AG04450 (cell line): ENCODE measurements at regions of chr2 and their contacts with region 1.

Region 1: DNA sequence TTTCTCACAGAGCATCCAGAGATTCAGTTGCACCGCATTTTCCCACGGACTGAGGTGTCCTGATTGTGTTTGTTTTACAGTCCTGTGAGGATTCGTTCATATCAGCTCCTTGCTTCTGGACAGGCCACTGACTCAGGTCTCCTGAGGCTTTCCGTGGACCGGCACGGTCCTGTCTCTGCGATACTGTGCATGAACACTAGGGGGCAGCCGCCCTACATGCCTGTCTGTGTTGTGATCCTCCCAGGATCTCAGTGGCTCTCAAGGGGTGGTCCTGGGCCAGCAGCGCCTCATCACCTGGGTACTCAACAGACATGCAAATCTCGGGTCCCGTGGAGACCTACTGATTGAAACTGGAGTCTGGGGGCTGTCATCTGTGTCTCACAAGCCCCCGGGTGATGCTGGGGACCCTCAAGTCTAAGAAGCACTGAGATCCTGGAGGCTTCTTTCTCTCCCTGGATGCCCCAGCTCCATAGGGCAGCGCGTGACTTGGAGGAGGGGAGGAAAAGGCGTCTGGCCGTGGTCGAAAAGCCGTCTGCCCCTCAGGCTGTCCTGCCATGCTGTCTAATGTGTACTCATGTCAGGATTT is 28.9 kb downstream of the IL1R2 start:
- DNase-seq: peak; percentile 69
- H3K4me3 ChIP-seq: no peak overlapping the region
- H3K27ac ChIP-seq: no peak overlapping the region
- H3K27me3 ChIP-seq: no peaks in the 10 kb centered on the region
- CTCF ChIP-seq: peak; percentile 99

Region 2: DNA sequence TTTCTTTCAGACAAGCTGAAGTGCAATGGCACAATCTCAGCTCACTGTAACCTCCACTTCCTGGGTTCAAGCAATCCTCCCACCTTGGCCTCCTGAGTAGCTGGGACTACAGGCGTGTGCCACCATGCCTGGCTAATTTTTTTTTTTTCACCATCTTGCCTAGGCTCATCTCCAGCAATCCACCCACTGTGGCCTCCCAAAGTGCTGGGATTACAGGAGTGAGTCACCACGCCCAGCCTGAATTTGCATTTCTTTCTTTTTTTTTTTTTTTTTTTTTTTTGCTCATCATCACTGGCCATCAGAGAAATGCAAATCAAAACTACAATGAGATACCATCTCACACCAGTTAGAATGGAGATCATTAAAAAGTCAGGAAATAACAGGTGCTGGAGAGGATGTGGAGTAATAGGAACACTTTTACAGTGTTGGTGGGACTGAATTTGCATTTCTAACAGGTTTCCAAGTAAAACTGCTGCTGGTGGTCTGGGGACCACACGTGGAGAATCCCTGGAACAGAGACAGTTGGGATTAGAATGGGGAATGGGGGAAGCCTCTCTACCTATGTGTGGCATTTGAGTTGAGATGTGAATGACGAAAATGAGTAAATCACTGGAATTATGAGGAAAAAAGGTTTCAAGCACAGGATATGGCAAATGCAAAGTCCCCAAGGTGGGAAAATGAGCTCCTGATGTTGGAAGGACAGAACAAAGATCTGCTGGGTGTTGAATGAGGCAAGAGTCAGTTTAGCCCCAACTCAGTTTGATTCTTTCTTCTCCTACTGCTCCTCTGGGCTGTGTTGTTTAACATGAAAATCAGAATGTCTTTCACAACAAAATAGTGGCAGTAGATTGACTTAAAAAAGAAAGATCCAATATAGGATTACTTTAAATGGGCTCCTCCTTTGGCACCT is 412.0 kb before region 1 on chr2:
- CTCF ChIA-PET with region 1: no interaction called
- POLR2A ChIA-PET with region 1: no interaction called
- DNase-seq: no peak
- H3K4me3 ChIP-seq: no peak overlapping the region
- H3K27ac ChIP-seq: no peak overlapping the region
- H3K27me3 ChIP-seq: peaks cover 3% of the 10 kb centered on the region
- CTCF ChIP-seq: no peak

Region 3: GRCh38 chr2:102005989-102006885 is 14.5 kb before region 1 on chr2:
- CTCF ChIA-PET with region 1: interaction called, 25 read pairs
- POLR2A ChIA-PET with region 1: no interaction called
- DNase-seq: no peak
- H3K4me3 ChIP-seq: no peak overlapping the region
- H3K27ac ChIP-seq: no peak overlapping the region
- H3K27me3 ChIP-seq: peaks cover 9% of the 10 kb centered on the region
- CTCF ChIP-seq: peak; percentile 76

Region 4: GRCh38 chr2:102050854-102051391 is 30.2 kb after region 1 on chr2:
- CTCF ChIA-PET with region 1: interaction called, 12 read pairs
- POLR2A ChIA-PET with region 1: no interaction called
- DNase-seq: no peak
- H3K4me3 ChIP-seq: no peak overlapping the region
- H3K27ac ChIP-seq: peak overlapping the region; percentile 70
- H3K27me3 ChIP-seq: no peaks in the 10 kb centered on the region
- CTCF ChIP-seq: no peak

Region 5: DNA sequence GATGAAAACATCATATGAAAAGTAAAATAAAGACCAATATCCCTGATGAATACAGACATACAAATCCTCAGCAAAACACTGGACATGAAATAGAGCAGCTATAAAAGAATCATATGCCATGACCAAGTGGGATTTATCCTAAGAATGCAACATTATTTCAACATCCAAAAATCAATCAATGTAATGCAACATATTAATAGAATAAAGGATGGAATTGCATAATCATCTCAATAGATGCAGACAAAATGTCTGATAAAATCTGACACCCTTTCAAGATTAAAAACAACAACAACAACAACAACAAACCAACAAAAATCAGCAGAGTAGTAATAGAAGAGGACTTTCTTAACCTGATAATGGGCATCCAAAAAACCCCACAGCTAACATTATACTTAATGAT is 58.1 kb after region 1 on chr2:
- CTCF ChIA-PET with region 1: no interaction called
- POLR2A ChIA-PET with region 1: no interaction called
- DNase-seq: no peak
- H3K4me3 ChIP-seq: no peak overlapping the region
- H3K27ac ChIP-seq: no peak overlapping the region
- H3K27me3 ChIP-seq: no peaks in the 10 kb centered on the region
- CTCF ChIP-seq: no peak

Region 6: GRCh38 chr2:102141970-102142828 is 121.5 kb after region 1 on chr2 and contains the start of gene IL1R1:
- CTCF ChIA-PET with region 1: interaction called, 14 read pairs
- POLR2A ChIA-PET with region 1: interaction called, 3 read pairs
- DNase-seq: no peak
- H3K4me3 ChIP-seq: peak within 1 kb of the TSS; percentile 88
- H3K27ac ChIP-seq: peak within 1 kb of the TSS; percentile 88
- H3K27me3 ChIP-seq: no peaks in the 10 kb centered on the region
- CTCF ChIP-seq: no peak
- polyA plus RNA-seq, gene IL1R1: 88.8 and 102 TPM in 2 replicates

Region 7: DNA sequence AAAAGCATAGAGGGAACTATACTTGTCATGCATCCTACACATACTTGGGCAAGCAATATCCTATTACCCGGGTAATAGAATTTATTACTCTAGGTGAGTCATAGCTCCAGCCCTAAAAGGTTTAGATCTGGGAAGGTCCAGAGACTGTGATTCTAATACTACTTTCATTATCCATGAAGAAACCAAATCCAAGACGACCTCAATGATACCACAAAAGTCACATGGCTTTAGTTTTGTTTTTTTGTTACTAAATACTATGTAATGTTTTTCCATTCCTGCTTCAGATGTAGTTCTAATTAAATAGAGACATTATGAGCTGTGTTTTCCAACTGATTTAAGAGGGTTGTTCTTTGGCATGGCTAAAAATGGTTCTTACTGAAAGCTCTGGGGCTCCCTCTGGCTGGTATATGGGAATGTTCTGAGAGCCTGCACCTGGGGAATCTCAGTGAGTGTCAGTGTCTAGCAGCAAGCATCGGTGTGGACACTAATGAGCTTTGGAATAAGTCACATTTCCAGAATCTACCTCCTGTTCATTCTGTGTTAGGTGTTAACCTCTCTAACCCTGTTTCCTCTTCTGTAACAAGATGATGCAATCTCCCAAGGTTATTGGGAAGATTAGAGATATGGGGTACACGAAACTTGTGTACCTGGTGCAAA is 145.6 kb after region 1 on chr2:
- CTCF ChIA-PET with region 1: interaction called, 54 read pairs
- POLR2A ChIA-PET with region 1: no interaction called
- DNase-seq: no peak
- H3K4me3 ChIP-seq: no peak overlapping the region
- H3K27ac ChIP-seq: no peak overlapping the region
- H3K27me3 ChIP-seq: no peaks in the 10 kb centered on the region
- CTCF ChIP-seq: peak; percentile 64

Region 8: DNA sequence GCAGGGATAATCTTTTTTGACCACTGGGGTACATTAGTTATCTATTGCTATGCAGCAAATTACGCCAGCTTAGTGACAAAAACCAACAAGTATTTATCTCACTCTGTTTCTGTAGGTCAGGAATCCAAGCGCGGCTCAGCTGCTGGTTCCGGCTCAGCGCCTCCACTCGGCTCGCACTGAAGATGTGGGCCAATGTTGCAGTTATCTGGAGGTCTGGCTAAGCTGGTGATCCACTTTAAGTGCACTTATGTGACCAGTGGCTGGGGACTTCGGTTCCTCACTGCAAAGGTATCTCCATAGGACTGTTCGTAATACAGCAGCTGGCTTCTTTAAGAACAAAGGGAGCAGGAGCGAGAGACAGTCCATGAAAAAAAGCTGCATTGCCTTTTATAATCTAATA is 1333.1 kb after region 1 on chr2:
- CTCF ChIA-PET with region 1: no interaction called
- POLR2A ChIA-PET with region 1: no interaction called
- DNase-seq: no peak
- H3K4me3 ChIP-seq: no peak overlapping the region
- H3K27ac ChIP-seq: no peak overlapping the region
- H3K27me3 ChIP-seq: no peaks in the 10 kb centered on the region
- CTCF ChIP-seq: no peak